AG04450 (cell line): ENCODE measurements at regions of chr1 and their contacts with region 1.

Region 1: DNA sequence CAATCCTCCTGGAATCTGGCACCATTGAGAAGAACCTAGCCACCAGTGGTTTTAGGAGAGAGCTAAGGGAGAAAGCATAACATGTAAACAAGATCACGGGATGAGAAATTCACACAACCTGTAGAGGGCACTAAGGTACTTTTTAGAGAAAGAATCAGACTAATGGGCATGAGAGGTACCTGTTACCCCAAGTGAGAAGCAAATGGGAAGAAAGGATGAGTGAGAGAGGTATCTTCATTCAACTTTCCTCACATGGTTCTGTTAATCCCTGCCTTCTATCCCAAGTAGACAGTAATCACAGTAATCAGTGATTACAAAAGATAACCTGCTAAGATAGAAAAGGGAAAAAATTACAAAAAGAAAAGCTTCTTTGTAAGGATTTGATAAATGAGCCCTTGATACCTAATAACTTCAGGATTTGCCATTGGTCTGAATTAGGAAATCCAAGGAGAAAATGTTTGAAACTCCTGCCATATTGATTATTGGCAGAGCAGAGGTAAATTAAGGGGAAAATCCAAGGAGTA is 251.1 kb upstream of the ADGRL2 start:
- DNase-seq: peak; percentile 4
- H3K4me3 ChIP-seq: no peak overlapping the region
- H3K27ac ChIP-seq: no peak overlapping the region
- H3K27me3 ChIP-seq: no peaks in the 10 kb centered on the region
- CTCF ChIP-seq: peak; percentile 61

Region 2: GRCh38 chr1:81559662-81560350 is 10.1 kb after region 1 on chr1:
- CTCF ChIA-PET with region 1: interaction called, 15 read pairs
- POLR2A ChIA-PET with region 1: no interaction called
- DNase-seq: no peak
- H3K4me3 ChIP-seq: no peak overlapping the region
- H3K27ac ChIP-seq: no peak overlapping the region
- H3K27me3 ChIP-seq: no peaks in the 10 kb centered on the region
- CTCF ChIP-seq: peak; percentile 35

Region 3: GRCh38 chr1:81596341-81596740 is 46.7 kb after region 1 on chr1:
- CTCF ChIA-PET with region 1: no interaction called
- POLR2A ChIA-PET with region 1: no interaction called
- DNase-seq: no peak
- H3K4me3 ChIP-seq: no peak overlapping the region
- H3K27ac ChIP-seq: no peak overlapping the region
- H3K27me3 ChIP-seq: no peaks in the 10 kb centered on the region
- CTCF ChIP-seq: no peak

Region 4: GRCh38 chr1:81760477-81761097 is 210.9 kb after region 1 on chr1:
- CTCF ChIA-PET with region 1: interaction called, 89 read pairs
- POLR2A ChIA-PET with region 1: no interaction called
- DNase-seq: peak; percentile 3
- H3K4me3 ChIP-seq: no peak overlapping the region
- H3K27ac ChIP-seq: no peak overlapping the region
- H3K27me3 ChIP-seq: no peaks in the 10 kb centered on the region
- CTCF ChIP-seq: peak; percentile 53

Region 5: DNA sequence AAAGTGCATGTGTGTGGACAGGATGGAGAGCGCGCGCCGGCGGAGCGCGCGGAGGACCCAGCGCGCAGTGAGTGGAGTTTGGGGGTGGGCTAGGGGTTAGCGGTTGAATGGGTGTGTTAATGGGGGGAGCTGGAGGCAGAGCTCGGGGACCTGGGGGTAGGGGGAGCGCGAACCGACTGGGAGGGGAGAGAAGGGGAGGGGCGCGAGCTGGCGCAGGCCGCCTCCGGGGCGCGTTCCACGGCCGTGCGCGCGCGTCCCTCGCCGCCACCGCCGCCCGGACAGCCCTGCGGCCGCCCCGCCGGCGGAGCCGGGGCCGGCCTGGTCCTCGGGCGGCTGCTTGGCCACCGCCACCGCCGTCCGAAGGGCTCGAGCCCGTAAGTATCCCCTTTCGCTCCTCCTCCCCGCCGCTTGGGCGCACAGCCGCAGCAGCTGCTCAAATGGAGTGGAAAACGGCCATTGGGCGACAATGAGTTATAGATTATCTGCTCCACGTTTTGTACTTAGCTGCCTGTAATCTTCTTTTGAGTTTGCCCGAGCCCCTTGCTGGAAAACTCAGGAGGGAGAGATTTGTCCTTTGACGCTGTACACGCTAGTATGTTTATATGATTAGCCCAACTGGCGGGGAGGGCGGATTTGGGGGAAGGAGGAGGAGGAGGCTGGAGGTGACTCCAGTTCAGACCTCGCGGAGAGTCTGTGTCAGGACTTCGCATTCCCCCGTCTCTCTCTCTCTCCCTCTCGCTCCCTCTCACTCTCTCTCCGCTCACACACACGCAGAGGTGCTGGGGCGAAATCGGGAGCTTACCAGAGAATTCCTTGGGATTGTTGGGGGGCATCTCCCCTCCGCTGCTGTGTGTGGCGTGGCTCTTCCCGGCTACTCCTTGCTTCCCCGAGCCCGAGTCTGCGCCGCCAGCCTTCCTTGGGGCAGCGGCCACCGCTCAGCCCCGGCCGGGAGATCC is 251.3 kb after region 1 on chr1 and contains the start of gene ADGRL2:
- CTCF ChIA-PET with region 1: interaction called, 18 read pairs
- POLR2A ChIA-PET with region 1: no interaction called
- DNase-seq: peak; percentile 66
- H3K4me3 ChIP-seq: peak within 1 kb of the TSS; percentile 75
- H3K27ac ChIP-seq: peak within 1 kb of the TSS; percentile 68
- H3K27me3 ChIP-seq: peaks cover 4% of the 10 kb centered on the region
- CTCF ChIP-seq: no peak
- polyA plus RNA-seq, gene ADGRL2: 22.7 and 24.8 TPM in 2 replicates